ENCODE measurements at regions of chr11 and their contacts with region 1.

Region 1: GRCh38 chr11:63838678-63839507 is at the start of gene MARK2:
- DNase-seq: peak; percentile 96
- H3K4me3 ChIP-seq: peak within 1 kb of the TSS; percentile 70 to 87 (median 85)
- H3K27ac ChIP-seq: peak within 1 kb of the TSS; percentile 61
- H3K4me1 ChIP-seq: peaks cover 26% of the 10 kb centered on the region
- H3K27me3 ChIP-seq: no peaks in the 10 kb centered on the region
- CTCF ChIP-seq: no peak
- POLR2A ChIP-seq: peak; percentile 72
- total RNA-seq, gene MARK2: 33.4 and 34.7 TPM in 2 replicates

Region 2: DNA sequence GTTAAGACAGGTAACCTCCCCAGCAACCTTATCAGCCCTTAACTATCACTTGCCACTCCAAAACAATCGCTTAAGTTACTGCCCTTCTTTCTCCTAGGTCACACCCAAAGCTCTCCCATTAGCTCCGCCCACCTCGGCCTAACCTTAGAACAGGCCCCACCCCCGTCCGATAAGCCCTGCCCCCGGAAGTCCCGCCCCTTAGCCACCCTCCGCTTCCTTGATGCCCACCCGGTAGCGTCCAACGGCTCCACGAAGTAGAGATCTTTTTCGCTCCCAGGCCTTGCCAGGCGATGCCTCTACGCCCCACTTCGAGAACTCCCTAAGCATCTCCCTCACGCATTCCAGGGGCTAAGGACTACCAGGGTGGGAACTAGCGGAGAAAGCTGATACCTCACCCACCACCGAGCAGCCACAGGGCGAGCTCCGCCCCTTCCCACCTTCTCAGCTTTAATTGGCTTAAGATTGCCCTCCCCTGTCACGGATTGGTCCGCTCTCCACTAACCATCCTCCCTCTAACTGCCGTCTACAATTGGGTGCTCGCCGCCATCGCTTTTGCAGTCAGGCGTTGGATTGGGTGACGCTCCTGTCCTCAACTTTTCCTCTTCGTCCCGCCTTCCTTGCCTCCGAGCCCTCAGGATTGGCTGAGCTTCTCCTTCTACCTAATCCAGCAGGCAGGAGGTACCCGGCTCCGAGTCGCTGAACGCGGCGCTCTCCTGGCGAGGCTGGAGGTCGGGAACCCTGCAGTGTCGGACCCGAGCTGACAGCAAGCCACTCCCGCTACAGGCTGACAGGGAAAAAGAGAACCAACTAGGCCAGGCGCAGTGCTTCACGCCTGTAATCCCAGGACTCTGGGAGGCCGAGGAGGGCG is 1084.9 kb before region 1 on chr11 and contains the start of gene ZBTB3:
- CTCF ChIA-PET with region 1: no interaction called
- POLR2A ChIA-PET with region 1: no interaction called
- dilution Hi-C with region 1: no loop called
- intact Hi-C with region 1: loop called (anchors 5 kb)
- DNase-seq: peak; percentile 100
- H3K4me3 ChIP-seq: peak within 1 kb of the TSS; percentile 32 to 71 (median 67)
- H3K27ac ChIP-seq: peak within 1 kb of the TSS; percentile 61
- H3K4me1 ChIP-seq: peaks cover 5% of the 10 kb centered on the region
- H3K27me3 ChIP-seq: no peaks in the 10 kb centered on the region
- CTCF ChIP-seq: no peak
- POLR2A ChIP-seq: peak; percentile 75
- total RNA-seq, gene ZBTB3: 6.9 and 8.1 TPM in 2 replicates

Region 3: DNA sequence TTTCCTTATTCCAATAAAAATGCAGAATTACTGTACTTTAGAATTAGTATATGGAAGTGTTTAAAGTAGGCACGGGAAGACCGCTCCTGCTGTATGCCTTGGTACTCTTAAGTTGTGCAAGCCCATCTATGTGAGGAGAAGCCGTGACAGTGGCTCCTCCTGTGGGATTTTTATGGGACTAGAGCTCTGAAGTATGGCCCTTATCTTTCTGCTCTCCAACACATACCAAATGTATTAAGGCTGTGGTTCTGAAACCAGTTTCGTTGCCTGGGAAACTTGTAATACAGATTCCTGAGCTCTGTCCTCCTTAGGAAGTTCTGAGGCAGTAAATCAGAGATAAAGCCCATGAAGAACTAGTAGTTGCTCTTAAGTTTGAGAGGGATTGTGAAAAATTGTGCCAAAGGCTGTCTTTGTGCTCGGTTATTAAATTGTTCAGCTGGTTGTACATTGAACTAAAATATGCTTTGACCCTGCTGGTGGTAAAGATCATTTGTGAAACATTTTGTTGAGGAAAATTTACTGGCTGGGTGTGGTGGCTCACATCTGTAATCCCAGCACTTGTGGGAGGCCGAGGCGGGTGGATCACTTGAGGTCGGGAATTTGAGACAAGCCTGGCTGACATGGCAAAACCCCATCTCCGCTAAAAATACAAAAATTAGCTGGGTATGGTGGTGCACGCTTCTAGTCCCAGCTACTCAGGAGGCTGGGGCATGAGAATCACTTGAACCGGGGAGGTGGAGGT is 128.2 kb before region 1 on chr11:
- CTCF ChIA-PET with region 1: no interaction called
- POLR2A ChIA-PET with region 1: no interaction called
- dilution Hi-C with region 1: no loop called
- intact Hi-C with region 1: no loop called
- DNase-seq: peak; percentile 68
- H3K4me3 ChIP-seq: no peak overlapping the region
- H3K27ac ChIP-seq: no peak overlapping the region
- H3K4me1 ChIP-seq: peaks cover 24% of the 10 kb centered on the region
- H3K27me3 ChIP-seq: no peaks in the 10 kb centered on the region
- CTCF ChIP-seq: no peak
- POLR2A ChIP-seq: no peak

Region 4: DNA sequence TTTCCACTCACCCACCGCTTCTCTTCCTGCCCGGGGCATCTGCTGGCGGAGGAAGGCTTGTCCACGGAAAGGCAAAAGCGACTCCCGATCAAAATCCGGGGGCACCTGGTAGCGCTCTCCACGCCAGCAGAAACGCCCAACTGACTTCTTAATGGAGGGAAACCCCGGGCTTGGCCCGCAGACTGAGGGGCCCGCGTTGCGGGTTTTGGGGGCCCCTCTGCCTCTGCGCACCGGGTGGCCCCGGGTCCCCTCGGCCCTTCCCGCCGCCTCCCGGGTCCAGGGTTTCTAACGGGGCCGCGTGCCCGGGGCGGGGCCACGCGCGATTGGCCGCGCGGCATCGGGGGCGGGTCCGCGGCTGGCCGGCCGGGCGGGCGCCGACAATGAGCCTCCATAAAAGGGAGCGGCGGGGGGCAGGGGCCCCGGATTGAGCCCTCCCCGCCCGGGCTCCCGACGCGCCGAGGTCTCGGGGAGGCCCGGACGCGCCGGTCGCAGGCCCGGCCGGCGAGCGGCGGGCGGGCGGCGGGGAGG is 25.8 kb before region 1 on chr11 and contains the start of gene SPINDOC:
- CTCF ChIA-PET with region 1: interaction called, 3 read pairs
- POLR2A ChIA-PET with region 1: no interaction called
- dilution Hi-C with region 1: no loop called
- intact Hi-C with region 1: loop called (anchors 2 kb)
- DNase-seq: peak; percentile 61
- H3K4me3 ChIP-seq: peak within 1 kb of the TSS; percentile 65 to 73 (median 70)
- H3K27ac ChIP-seq: peak within 1 kb of the TSS; percentile 51
- H3K4me1 ChIP-seq: peaks cover 18% of the 10 kb centered on the region
- H3K27me3 ChIP-seq: no peaks in the 10 kb centered on the region
- CTCF ChIP-seq: no peak
- POLR2A ChIP-seq: peak; percentile 78
- total RNA-seq, gene SPINDOC: 51.5 and 54.5 TPM in 2 replicates

Region 5: GRCh38 chr11:63906585-63906984 is 67.7 kb after region 1 on chr11:
- CTCF ChIA-PET with region 1: interaction called, 30 read pairs
- POLR2A ChIA-PET with region 1: no interaction called
- dilution Hi-C with region 1: no loop called
- intact Hi-C with region 1: no loop called
- DNase-seq: no peak
- H3K4me3 ChIP-seq: no peak overlapping the region
- H3K27ac ChIP-seq: no peak overlapping the region
- H3K4me1 ChIP-seq: no peaks in the 10 kb centered on the region
- H3K27me3 ChIP-seq: no peaks in the 10 kb centered on the region
- CTCF ChIP-seq: peak in 1 of 2 donors; percentile 20
- POLR2A ChIP-seq: no peak

Region 6: GRCh38 chr11:63938479-63939396 is 99.8 kb after region 1 on chr11 and contains the start of gene NAA40:
- CTCF ChIA-PET with region 1: interaction called, 264 read pairs
- POLR2A ChIA-PET with region 1: interaction called, 5 read pairs
- dilution Hi-C with region 1: no loop called
- intact Hi-C with region 1: loop called (anchors 2 kb)
- DNase-seq: peak; percentile 96
- H3K4me3 ChIP-seq: peak within 1 kb of the TSS; percentile 73 to 98 (median 78)
- H3K27ac ChIP-seq: peak within 1 kb of the TSS; percentile 43
- H3K4me1 ChIP-seq: peaks cover 11% of the 10 kb centered on the region
- H3K27me3 ChIP-seq: no peaks in the 10 kb centered on the region
- CTCF ChIP-seq: peak in 1 of 2 donors; percentile 14
- POLR2A ChIP-seq: peak; percentile 63
- total RNA-seq, gene NAA40: 30.9 and 32.3 TPM in 2 replicates

Region 7: DNA sequence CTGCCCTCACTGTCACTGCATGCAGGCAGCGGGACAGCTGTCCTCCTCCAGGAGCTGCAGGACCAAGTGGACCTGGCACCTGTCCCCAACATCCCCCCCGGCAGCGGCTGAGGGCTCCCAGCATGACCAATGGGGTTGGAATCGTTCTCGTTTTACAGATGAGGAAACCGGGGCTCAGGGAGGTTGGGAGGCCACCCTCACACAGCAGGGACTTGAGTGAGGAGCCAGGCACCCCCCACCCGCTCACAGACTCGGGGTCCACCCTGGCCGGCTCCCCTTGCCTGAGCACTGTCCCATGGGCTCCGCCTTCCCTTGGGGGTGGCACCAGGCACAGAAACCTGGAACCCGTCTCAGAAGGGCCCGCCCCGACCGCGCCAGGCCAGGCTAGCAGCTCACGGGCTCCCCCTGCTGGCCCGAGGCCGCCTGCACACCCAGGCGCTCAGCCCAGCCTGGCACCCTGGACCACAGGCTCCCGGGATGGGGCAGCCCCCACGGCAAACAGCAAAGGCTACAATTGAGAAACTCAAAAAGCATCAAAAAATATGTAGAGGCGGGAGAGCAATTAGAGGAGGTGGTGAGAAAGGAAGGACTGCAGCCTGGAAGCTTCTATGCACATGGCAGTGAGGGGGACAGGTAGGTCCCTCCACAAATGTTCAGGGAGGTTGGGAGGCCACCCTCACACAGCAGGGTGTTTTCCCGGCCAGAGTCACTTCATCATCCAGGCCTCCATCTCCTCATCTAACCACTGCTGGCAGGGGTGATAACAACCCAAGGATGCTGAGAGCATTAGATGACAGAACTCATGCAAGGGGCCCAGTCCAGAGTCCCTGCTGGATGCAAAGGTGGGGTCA is 314.2 kb after region 1 on chr11:
- CTCF ChIA-PET with region 1: interaction called, 11 read pairs
- POLR2A ChIA-PET with region 1: no interaction called
- dilution Hi-C with region 1: no loop called
- intact Hi-C with region 1: loop called (anchors 1 kb)
- DNase-seq: peak; percentile 42
- H3K4me3 ChIP-seq: no peak overlapping the region
- H3K27ac ChIP-seq: no peak overlapping the region
- H3K4me1 ChIP-seq: no peaks in the 10 kb centered on the region
- H3K27me3 ChIP-seq: no peaks in the 10 kb centered on the region
- CTCF ChIP-seq: peak; percentile 99 to 100
- POLR2A ChIP-seq: no peak

Measured in endothelial cell of umbilical vein (primary cell).